Breast epithelium (tissue), 4 donors: ENCODE measurements at regions of chr1 and their contacts with region 1.

Region 1: GRCh38 chr1:65687428-65688214 is 105.1 kb upstream of the PDE4B start:
- DNase-seq: peak; percentile 56 to 85
- H3K4me3 ChIP-seq: no peak overlapping the region
- H3K27ac ChIP-seq: no peak overlapping the region
- H3K4me1 ChIP-seq: peaks cover 4 to 8% of the 10 kb centered on the region in 2 donors
- H3K27me3 ChIP-seq: no peaks in the 10 kb centered on the region
- CTCF ChIP-seq: peak; percentile 96 to 98 (median 97)
- POLR2A ChIP-seq: no peak

Region 2: DNA sequence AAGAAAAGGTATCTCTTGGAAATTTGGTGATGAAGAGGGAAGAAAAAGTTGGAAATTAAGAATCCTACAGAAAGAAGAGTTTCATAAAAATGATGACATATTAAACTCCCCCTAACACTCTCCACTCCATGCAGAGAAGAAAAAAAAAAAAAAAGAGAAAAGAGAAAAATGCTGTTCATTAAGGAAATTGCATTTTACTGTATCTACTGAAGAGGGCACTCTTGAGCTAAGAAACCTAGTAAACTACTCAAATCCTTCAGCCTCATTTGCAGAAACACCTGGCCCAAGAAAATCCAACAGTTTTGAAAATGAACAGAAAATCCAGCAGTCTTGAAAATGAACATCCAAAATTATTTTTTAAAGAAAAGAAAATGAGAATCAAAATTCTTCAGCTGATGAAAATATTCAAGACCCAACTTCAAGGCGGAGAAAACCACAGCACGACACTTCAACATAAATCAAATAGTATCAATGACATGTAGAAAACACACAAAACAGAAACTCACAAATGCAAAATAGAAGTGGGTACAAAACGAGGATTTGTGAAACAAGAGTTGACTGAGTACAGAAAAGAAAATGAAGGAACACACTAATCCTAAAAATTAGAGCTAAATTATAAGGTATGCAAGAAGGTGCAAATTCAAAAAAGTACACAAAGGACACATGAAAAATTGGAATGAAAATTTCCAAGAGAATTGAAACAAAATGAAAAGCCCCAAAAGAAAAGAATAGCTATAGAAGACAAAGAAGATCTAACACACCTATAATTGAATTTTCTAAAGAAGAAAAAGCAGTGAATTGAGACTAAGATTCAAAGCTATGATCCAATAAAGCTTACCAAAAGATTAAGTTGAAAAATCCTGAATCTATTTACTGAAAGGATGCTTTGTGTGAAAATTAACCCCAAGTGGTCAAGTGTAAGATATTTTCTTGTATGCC is 451.5 kb before region 1 on chr1:
- intact Hi-C with region 1: loop called (anchors 10 kb)
- DNase-seq: no peak
- H3K4me3 ChIP-seq: no peak overlapping the region
- H3K27ac ChIP-seq: no peak overlapping the region
- H3K4me1 ChIP-seq: no peaks in the 10 kb centered on the region
- H3K27me3 ChIP-seq: no peaks in the 10 kb centered on the region
- CTCF ChIP-seq: peak in 2 of 3 donors; percentile 29 to 34
- POLR2A ChIP-seq: no peak

Region 3: DNA sequence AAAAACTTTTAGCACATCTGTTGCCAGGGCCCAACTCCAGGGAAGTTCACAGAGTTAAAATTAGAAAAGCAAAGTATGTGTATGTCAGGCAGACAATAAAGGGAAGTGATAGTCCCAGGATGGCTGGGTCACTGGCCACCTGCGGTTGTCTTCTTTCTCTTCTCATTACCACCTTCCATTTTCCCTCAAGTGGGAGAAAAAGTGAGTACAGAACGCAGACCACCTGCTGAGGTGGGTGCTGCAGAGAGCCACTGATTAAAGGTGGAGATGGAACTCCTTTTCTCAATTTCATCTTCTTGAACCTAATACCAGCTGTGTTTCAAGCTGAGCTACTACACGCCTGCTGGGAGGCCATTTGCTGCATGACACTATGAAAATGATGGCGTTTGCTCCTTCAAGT is 16.2 kb after region 1 on chr1:
- intact Hi-C with region 1: no loop called
- DNase-seq: no peak
- H3K4me3 ChIP-seq: no peak overlapping the region
- H3K27ac ChIP-seq: no peak overlapping the region
- H3K4me1 ChIP-seq: no peaks in the 10 kb centered on the region
- H3K27me3 ChIP-seq: no peaks in the 10 kb centered on the region
- CTCF ChIP-seq: no peak
- POLR2A ChIP-seq: no peak

Region 4: GRCh38 chr1:66464802-66465201 is 777.2 kb after region 1 on chr1:
- intact Hi-C with region 1: loop called (anchors 5 kb)
- DNase-seq: no peak
- H3K4me3 ChIP-seq: no peak overlapping the region
- H3K27ac ChIP-seq: no peak overlapping the region
- H3K4me1 ChIP-seq: no peaks in the 10 kb centered on the region
- H3K27me3 ChIP-seq: no peaks in the 10 kb centered on the region
- CTCF ChIP-seq: no peak
- POLR2A ChIP-seq: no peak